ENCODE measurements at regions of chr22 and their contacts with region 1.

Region 1: GRCh38 chr22:23826465-23827199 is 12.2 kb downstream of the DERL3 start:
- DNase-seq: peak; percentile 37
- ATAC-seq: no peak

Region 2: DNA sequence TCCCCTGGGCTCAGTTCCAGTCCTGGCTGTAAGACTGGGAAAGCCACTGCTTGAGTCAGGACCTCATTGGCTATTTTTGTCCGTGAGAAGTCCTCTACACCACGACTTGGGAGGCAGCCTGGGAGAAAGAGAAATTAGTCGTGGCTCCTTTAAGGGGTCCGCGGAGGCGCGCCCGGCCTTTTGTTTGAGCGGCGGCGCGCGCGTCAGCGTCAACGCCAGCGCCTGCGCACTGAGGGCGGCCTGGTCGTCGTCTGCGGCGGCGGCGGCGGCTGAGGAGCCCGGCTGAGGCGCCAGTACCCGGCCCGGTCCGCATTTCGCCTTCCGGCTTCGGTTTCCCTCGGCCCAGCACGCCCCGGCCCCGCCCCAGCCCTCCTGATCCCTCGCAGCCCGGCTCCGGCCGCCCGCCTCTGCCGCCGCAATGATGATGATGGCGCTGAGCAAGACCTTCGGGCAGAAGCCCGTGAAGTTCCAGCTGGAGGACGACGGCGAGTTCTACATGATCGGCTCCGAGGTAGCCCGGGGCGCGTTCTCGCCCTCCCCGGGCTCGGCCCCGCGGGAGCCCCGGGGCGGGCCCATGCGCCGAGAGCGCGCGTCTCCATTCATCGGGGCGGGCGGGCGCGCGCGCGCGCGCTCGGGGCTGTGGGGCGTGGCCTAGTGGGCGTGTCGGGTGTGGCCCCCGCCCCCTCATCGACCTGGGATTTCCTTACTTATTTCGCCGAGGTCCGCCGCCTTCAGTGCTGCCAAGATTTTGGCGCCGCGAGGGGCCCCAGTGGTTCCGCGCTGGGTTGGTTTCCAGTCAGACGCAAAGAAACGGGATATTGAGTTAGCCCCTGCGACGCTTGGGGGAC is 39.7 kb before region 1 on chr22 and contains the start of gene SMARCB1:
- intact Hi-C with region 1: loop called (anchors 5 kb)
- DNase-seq: peak; percentile 98
- ATAC-seq: peak; percentile 93
- total RNA-seq, gene SMARCB1: 52.5 TPM

Region 3: GRCh38 chr22:23841736-23842445 is 15.3 kb after region 1 on chr22:
- intact Hi-C with region 1: loop called (anchors 2 kb)
- DNase-seq: peak; percentile 60
- ATAC-seq: no peak